Activated CD4-positive, alpha-beta T cell treated with anti-CD3 and anti-CD28 coated beads for 36 hours (primary cell): ENCODE measurements at regions of chr6 and their contacts with region 1.

Region 1: DNA sequence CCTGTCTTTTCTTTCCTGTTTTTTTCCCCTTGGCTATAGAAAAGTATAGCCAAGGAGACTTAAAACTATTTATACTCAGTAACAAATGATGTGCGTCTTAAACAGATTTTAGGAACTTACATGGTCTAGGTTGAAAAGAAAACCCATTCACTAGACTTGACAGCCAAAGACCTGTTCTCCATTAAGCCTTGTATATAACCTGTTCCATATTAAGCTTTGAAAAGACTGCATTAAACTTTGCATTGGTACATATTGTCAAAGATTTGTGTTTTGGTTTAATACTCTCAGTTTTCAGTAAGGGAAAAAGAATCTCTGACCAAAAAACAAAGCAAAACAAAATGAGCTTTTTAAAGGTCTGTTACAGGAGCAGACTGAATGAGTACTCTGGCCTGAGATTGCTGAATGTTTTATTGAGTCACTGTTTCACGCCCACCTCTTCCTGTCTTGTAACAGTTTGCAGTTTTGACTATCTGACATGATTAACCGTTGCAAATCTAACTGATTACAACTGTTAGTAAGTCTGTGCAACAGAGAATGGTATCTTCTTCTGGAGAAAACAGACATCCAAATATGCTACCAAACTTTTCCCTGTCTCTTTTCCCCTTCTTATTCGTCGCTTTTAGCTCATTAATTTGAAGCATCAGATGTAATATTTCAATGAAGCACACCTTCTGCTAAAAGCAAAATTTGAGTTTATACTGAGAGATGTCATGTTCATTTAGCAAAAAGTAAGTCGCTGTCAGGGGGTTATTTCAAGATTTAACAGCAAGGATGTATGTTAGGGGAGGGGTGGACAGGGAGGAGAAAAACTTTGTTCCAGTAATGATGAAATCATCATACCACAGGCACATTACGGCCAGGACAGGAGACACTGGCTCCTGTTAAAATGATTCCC is 59.1 kb upstream of the SUPT3H start:
- DNase-seq: peak; percentile 69
- ATAC-seq: peak; percentile 92
- H3K4me3 Mint-ChIP-seq: peak overlapping the region; percentile 59
- H3K27ac Mint-ChIP-seq: peak overlapping the region; percentile 92
- H3K4me1 Mint-ChIP-seq: peaks cover 74% of the 10 kb centered on the region
- H3K27me3 Mint-ChIP-seq: peaks cover 2% of the 10 kb centered on the region

Region 2: GRCh38 chr6:44942217-44942616 is 494.6 kb before region 1 on chr6:
- CTCF ChIA-PET with region 1: no interaction called
- POLR2A ChIA-PET with region 1: no interaction called
- intact Hi-C with region 1: no loop called
- DNase-seq: no peak
- ATAC-seq: no peak
- H3K4me3 Mint-ChIP-seq: no peak overlapping the region
- H3K27ac Mint-ChIP-seq: no peak overlapping the region
- H3K4me1 Mint-ChIP-seq: peaks cover 25% of the 10 kb centered on the region
- H3K27me3 Mint-ChIP-seq: no peaks in the 10 kb centered on the region

Region 3: DNA sequence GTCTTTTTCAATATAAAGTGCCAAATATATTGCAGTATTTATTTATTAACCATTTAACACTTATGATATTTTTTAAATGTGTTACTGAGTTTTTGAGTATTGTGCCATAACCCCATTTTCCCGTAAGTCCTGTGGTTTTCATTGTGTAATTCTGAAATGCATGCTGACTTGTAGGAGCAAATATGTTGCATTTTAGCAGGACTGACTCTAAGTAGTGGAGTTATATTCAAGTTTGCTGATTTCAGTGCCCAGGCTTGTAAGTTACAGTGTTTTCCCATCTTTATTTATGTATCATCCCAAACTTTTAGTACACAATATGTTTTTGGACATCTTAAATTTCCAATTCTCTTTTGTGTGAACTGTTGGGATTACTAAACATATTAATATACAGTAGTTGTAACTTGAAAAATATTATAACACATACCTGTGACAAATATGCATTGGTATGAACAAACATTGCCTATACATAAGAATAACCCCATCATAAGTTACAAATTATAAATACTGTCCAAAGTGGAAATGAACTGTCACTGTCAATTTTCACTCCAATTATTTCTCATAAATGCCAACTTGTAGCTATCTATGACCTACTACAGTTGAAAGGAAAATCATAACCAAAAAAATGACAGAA is 288.0 kb before region 1 on chr6:
- CTCF ChIA-PET with region 1: no interaction called
- POLR2A ChIA-PET with region 1: no interaction called
- intact Hi-C with region 1: no loop called
- DNase-seq: no peak
- ATAC-seq: no peak
- H3K4me3 Mint-ChIP-seq: no peak overlapping the region
- H3K27ac Mint-ChIP-seq: no peak overlapping the region
- H3K4me1 Mint-ChIP-seq: no peaks in the 10 kb centered on the region
- H3K27me3 Mint-ChIP-seq: no peaks in the 10 kb centered on the region

Region 4: DNA sequence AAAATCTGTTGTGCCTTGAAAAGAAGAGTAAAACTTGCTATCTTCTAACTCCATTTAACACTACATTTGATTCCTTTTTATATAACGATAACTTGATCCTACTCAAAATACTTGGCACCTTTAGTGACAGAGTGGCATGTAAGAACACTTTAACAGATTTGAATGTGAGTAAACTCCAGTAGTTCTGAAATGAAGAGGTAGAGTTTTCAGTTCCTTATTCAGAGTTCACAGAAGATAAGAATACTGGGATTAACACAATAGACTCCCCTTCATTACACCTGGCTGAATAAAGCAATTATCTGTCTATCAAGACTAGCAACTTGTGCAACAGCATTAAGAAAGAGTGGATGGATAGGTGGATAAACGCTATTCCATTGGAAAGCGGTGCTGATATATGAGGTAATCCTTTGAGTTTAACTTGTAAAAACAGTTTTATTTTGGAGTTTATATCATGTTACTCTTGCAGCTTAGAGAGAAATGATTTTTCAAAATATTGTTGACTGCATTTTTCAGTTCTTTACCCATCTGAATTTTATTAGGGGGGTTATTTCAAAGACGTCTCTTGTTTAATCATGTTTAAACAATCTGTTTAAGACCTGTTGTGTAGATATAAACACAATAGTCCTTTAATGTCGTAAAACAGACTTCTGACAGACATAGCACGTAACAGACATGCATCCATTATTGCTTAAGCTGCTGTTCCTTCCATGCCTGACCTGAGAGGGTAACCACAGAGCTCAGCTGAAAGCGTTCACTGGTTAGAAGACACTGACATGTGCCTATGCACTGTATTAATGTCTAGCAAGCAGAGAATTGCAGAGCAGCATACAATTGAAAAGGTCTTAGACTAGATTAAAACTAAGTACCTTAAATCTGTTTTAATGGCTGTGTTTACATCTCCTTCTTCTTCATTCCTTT is 43.3 kb after region 1 on chr6:
- CTCF ChIA-PET with region 1: interaction called, 3 read pairs
- POLR2A ChIA-PET with region 1: interaction called, 3 read pairs
- intact Hi-C with region 1: loop called (anchors 1 to 2 kb)
- DNase-seq: peak; percentile 18
- ATAC-seq: peak; percentile 47
- H3K4me3 Mint-ChIP-seq: no peak overlapping the region
- H3K27ac Mint-ChIP-seq: peak overlapping the region; percentile 44
- H3K4me1 Mint-ChIP-seq: peaks cover 34% of the 10 kb centered on the region
- H3K27me3 Mint-ChIP-seq: no peaks in the 10 kb centered on the region

Region 5: DNA sequence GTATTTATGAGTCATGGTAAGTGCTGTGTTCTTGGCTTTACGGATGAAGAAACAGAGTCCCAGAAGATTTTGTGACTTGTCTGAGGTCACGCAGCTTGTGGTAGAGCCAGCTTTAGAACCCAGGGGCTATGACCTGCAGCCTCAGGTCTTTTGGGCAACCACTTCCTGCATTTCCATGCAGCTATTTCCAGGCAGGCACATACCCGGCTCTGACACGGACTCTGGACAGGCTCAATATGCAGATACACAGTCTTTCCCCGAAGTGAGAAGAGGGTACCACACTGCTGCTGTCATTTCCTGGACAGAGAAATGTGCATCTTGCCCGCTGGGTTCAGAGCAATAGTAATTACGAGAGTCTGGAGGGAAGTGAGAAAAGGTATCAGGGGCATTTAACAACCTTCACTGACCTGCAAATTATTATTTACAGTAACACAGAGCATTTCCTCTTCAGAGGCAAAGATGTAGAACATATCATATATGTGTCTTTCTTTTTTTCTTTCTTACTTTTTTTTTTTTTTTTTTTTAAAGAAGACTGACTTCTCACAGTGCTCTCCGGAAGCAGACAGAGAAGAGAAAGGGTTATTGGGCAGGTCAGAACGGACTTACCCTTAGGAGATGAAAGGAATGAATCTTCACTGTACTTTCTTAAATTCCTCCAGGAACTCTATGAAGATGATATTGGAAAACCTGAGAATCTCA is 393.8 kb after region 1 on chr6:
- CTCF ChIA-PET with region 1: no interaction called
- POLR2A ChIA-PET with region 1: no interaction called
- intact Hi-C with region 1: loop called in 1 of 2 experiments (anchors 5 kb)
- DNase-seq: peak; percentile 79
- ATAC-seq: peak; percentile 79
- H3K4me3 Mint-ChIP-seq: peak overlapping the region; percentile 63
- H3K27ac Mint-ChIP-seq: peak overlapping the region; percentile 93
- H3K4me1 Mint-ChIP-seq: peaks cover 46% of the 10 kb centered on the region
- H3K27me3 Mint-ChIP-seq: peaks cover 4% of the 10 kb centered on the region

Region 6: DNA sequence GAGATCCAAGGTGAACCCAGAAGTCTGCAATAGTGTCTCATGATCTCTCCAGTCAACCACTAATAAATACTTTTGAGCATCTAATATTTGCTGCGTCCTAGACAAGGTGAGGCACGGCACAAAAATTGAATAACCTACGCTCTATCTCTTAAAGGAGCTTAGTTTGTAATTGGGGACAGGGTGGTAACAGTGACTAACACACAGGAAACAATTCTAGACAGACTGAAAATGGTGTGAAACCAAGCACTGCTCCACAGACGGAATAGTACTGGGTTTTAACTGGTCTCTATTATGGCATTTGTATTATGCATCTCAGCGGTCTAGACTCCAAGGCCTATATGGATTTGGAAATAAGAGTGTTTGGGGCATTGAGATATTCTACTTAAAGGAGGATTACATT is 458.8 kb after region 1 on chr6:
- CTCF ChIA-PET with region 1: no interaction called
- POLR2A ChIA-PET with region 1: no interaction called
- intact Hi-C with region 1: no loop called
- DNase-seq: no peak
- ATAC-seq: peak; percentile 73
- H3K4me3 Mint-ChIP-seq: no peak overlapping the region
- H3K27ac Mint-ChIP-seq: no peak overlapping the region
- H3K4me1 Mint-ChIP-seq: peaks cover 7% of the 10 kb centered on the region
- H3K27me3 Mint-ChIP-seq: peaks cover 2% of the 10 kb centered on the region